CD4-positive, alpha-beta T cell (primary cell): ENCODE measurements at regions of chr20 and their contacts with region 1.

Region 1: DNA sequence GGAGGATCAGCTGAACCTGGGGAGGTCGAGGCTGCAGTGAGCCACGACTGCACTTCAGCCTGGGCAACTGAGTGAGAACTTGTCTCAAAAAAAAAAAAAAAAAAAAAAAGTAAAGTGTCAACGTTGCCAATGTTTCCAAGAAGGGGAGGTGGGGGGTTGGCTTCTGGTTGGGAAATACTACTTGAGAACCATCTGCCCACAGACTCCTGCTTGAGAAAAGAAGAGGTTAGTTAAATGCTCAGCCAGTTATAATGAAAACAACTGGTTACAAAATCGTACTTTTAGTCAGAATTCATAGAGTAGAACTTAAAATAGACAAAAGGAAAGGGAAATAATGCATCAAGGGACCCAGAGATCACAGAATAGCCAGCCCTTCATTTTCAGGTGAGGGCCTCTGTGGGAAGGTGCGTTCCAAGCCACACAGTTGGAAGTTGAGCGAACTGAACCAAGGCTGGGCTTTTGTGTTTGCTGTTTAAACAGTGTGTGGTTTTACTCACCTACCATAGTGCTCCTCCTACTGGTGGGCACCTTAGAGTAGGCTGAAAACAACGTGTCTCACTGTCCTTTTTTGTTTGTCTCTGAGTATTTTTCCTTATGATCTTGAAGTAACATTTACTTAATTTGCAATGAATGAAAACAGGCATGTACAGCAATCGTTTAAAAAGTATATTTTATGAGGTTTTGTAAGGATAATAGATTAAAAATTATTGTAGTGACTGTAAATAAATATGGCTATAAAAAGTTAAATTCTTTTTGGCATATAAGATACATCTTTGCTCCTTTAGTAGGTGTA is 200.7 kb downstream of the BCAS1 start:
- DNase-seq: peak; percentile 44 to 92 (median 61)
- ATAC-seq: peak; percentile 70
- H3K4me3 ChIP-seq: no peak overlapping the region
- H3K4me3 Mint-ChIP-seq: peak overlapping the region; percentile 17
- H3K27ac ChIP-seq: peak overlapping the region; percentile 36 to 46
- H3K27ac Mint-ChIP-seq: peak overlapping the region; percentile 98
- H3K4me1 ChIP-seq: peaks cover 66% of the 10 kb centered on the region
- H3K4me1 Mint-ChIP-seq: peaks cover 73% of the 10 kb centered on the region
- H3K27me3 ChIP-seq: no peaks in the 10 kb centered on the region
- H3K27me3 Mint-ChIP-seq: no peaks in the 10 kb centered on the region
- CTCF ChIP-seq: peak; percentile 92

Region 2: DNA sequence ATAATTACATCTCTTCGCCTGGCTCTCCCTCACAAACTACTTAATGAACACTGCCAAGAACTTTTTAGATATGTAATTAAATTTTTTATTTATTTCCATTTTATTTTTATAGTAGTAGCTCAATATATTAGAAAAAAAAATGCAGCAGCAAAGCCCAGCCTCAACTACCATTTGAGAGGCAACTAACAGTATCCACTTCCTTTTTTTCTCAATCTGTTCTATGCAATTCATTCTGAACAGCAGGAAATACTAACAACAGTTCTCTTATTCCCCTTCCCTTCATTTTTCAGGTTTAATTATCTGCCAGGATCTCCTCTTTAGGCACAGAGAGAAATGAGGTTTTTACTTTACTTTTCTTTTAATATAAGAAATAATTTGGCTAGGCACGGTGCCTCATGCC is 388.7 kb before region 1 on chr20:
- CTCF ChIA-PET with region 1: no interaction called
- POLR2A ChIA-PET with region 1: no interaction called
- intact Hi-C with region 1: no loop called
- DNase-seq: no peak
- ATAC-seq: no peak
- H3K4me3 ChIP-seq: no peak overlapping the region
- H3K4me3 Mint-ChIP-seq: no peak overlapping the region
- H3K27ac ChIP-seq: no peak overlapping the region
- H3K27ac Mint-ChIP-seq: no peak overlapping the region
- H3K4me1 ChIP-seq: no peaks in the 10 kb centered on the region
- H3K4me1 Mint-ChIP-seq: no peaks in the 10 kb centered on the region
- H3K27me3 ChIP-seq: no peaks in the 10 kb centered on the region
- H3K27me3 Mint-ChIP-seq: no peaks in the 10 kb centered on the region
- CTCF ChIP-seq: no peak

Region 3: GRCh38 chr20:53578492-53579222 is 291.0 kb before region 1 on chr20:
- CTCF ChIA-PET with region 1: interaction called, 4 read pairs
- POLR2A ChIA-PET with region 1: interaction called, 24 read pairs
- intact Hi-C with region 1: loop called (anchors 1 to 2 kb)
- DNase-seq: peak in 13 of 14 experiments; percentile 18 to 94 (median 44)
- ATAC-seq: peak; percentile 50
- H3K4me3 ChIP-seq: peak overlapping the region; percentile 57
- H3K4me3 Mint-ChIP-seq: peak overlapping the region; percentile 90
- H3K27ac ChIP-seq: peak overlapping the region; percentile 10 to 68
- H3K27ac Mint-ChIP-seq: peak overlapping the region; percentile 100
- H3K4me1 ChIP-seq: peaks cover 79% of the 10 kb centered on the region
- H3K4me1 Mint-ChIP-seq: peaks cover 96% of the 10 kb centered on the region
- H3K27me3 ChIP-seq: no peaks in the 10 kb centered on the region
- H3K27me3 Mint-ChIP-seq: no peaks in the 10 kb centered on the region
- CTCF ChIP-seq: peak; percentile 95

Region 4: DNA sequence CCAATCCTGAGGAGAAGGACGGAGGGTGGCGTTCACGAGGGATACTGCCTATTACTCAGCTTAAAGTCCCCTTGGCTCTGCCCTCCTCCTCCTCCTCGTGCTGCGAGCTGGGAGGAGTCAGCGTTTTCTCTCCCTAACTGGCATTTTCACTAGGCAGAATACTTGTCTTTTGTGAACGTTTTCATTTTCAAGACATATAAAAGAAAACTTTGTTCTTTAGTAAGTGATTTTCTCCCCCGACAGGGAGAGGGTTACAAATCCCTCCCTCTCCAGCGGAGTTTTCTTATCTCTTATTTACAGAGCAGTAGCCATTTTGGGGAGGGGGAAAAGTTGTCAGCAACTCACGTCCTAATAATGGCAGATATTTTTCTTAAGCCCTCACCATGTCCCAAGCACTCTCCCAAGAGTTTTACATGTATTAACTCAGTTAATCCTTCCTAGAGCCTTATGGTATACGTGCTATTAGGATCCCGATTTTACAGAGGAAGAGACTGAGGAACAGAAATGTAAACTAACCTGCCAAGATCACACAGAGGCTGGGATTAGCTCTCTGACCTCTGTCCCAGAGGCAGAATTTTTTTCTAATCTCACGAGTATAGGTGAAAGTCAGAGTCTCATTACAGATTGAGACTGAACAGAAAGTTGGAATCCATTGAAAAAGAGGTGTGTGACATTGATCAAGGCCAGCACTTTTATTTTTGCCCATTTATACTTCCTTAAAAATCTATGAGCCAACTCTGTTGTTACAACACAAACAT is 246.0 kb before region 1 on chr20:
- CTCF ChIA-PET with region 1: no interaction called
- POLR2A ChIA-PET with region 1: interaction called, 14 read pairs
- intact Hi-C with region 1: no loop called
- DNase-seq: peak in 9 of 14 experiments; percentile 20 to 75 (median 41)
- ATAC-seq: peak; percentile 78
- H3K4me3 ChIP-seq: peak overlapping the region; percentile 57
- H3K4me3 Mint-ChIP-seq: peak overlapping the region; percentile 82
- H3K27ac ChIP-seq: peak overlapping the region; percentile 58 to 81
- H3K27ac Mint-ChIP-seq: peak overlapping the region; percentile 92
- H3K4me1 ChIP-seq: peaks cover 34% of the 10 kb centered on the region
- H3K4me1 Mint-ChIP-seq: peaks cover 37% of the 10 kb centered on the region
- H3K27me3 ChIP-seq: no peaks in the 10 kb centered on the region
- H3K27me3 Mint-ChIP-seq: no peaks in the 10 kb centered on the region
- CTCF ChIP-seq: no peak

Region 5: GRCh38 chr20:53692413-53693067 is 177.1 kb before region 1 on chr20:
- CTCF ChIA-PET with region 1: no interaction called
- POLR2A ChIA-PET with region 1: interaction called, 11 read pairs
- intact Hi-C with region 1: no loop called
- DNase-seq: peak in 1 of 14 experiments; percentile 44
- ATAC-seq: no peak
- H3K4me3 ChIP-seq: no peak overlapping the region
- H3K4me3 Mint-ChIP-seq: peak overlapping the region; percentile 31
- H3K27ac ChIP-seq: peak overlapping the region in 1 of 2 donors; percentile 9
- H3K27ac Mint-ChIP-seq: peak overlapping the region; percentile 57
- H3K4me1 ChIP-seq: peaks cover 20% of the 10 kb centered on the region
- H3K4me1 Mint-ChIP-seq: peaks cover 27% of the 10 kb centered on the region
- H3K27me3 ChIP-seq: no peaks in the 10 kb centered on the region
- H3K27me3 Mint-ChIP-seq: no peaks in the 10 kb centered on the region
- CTCF ChIP-seq: no peak

Region 6: GRCh38 chr20:53750827-53751619 is 118.6 kb before region 1 on chr20:
- CTCF ChIA-PET with region 1: no interaction called
- POLR2A ChIA-PET with region 1: interaction called, 5 read pairs
- intact Hi-C with region 1: loop called (anchors 5 kb)
- DNase-seq: peak in 8 of 14 experiments; percentile 2 to 75 (median 34)
- ATAC-seq: peak; percentile 57
- H3K4me3 ChIP-seq: no peak overlapping the region
- H3K4me3 Mint-ChIP-seq: peak overlapping the region; percentile 65
- H3K27ac ChIP-seq: peak overlapping the region; percentile 53 to 74
- H3K27ac Mint-ChIP-seq: peak overlapping the region; percentile 93
- H3K4me1 ChIP-seq: peaks cover 60% of the 10 kb centered on the region
- H3K4me1 Mint-ChIP-seq: peaks cover 76% of the 10 kb centered on the region
- H3K27me3 ChIP-seq: no peaks in the 10 kb centered on the region
- H3K27me3 Mint-ChIP-seq: no peaks in the 10 kb centered on the region
- CTCF ChIP-seq: no peak

Region 7: GRCh38 chr20:53809183-53809582 is 60.5 kb before region 1 on chr20:
- CTCF ChIA-PET with region 1: no interaction called
- POLR2A ChIA-PET with region 1: no interaction called
- intact Hi-C with region 1: no loop called
- DNase-seq: no peak
- ATAC-seq: no peak
- H3K4me3 ChIP-seq: no peak overlapping the region
- H3K4me3 Mint-ChIP-seq: no peak overlapping the region
- H3K27ac ChIP-seq: no peak overlapping the region
- H3K27ac Mint-ChIP-seq: no peak overlapping the region
- H3K4me1 ChIP-seq: no peaks in the 10 kb centered on the region
- H3K4me1 Mint-ChIP-seq: peaks cover 6% of the 10 kb centered on the region
- H3K27me3 ChIP-seq: no peaks in the 10 kb centered on the region
- H3K27me3 Mint-ChIP-seq: no peaks in the 10 kb centered on the region
- CTCF ChIP-seq: no peak

Region 8: GRCh38 chr20:53847129-53847836 is 22.4 kb before region 1 on chr20:
- CTCF ChIA-PET with region 1: interaction called, 3 read pairs
- POLR2A ChIA-PET with region 1: interaction called, 15 read pairs
- intact Hi-C with region 1: loop called in 1 of 2 experiments (anchors 1 kb)
- DNase-seq: peak in 4 of 14 experiments; percentile 28 to 73 (median 64)
- ATAC-seq: peak; percentile 41
- H3K4me3 ChIP-seq: no peak overlapping the region
- H3K4me3 Mint-ChIP-seq: peak overlapping the region; percentile 79
- H3K27ac ChIP-seq: no peak overlapping the region
- H3K27ac Mint-ChIP-seq: peak overlapping the region; percentile 83
- H3K4me1 ChIP-seq: peaks cover 54% of the 10 kb centered on the region
- H3K4me1 Mint-ChIP-seq: peaks cover 63% of the 10 kb centered on the region
- H3K27me3 ChIP-seq: no peaks in the 10 kb centered on the region
- H3K27me3 Mint-ChIP-seq: no peaks in the 10 kb centered on the region
- CTCF ChIP-seq: no peak